ENCODE measurements at regions of chr22 and their contacts with region 1.

Region 1: DNA sequence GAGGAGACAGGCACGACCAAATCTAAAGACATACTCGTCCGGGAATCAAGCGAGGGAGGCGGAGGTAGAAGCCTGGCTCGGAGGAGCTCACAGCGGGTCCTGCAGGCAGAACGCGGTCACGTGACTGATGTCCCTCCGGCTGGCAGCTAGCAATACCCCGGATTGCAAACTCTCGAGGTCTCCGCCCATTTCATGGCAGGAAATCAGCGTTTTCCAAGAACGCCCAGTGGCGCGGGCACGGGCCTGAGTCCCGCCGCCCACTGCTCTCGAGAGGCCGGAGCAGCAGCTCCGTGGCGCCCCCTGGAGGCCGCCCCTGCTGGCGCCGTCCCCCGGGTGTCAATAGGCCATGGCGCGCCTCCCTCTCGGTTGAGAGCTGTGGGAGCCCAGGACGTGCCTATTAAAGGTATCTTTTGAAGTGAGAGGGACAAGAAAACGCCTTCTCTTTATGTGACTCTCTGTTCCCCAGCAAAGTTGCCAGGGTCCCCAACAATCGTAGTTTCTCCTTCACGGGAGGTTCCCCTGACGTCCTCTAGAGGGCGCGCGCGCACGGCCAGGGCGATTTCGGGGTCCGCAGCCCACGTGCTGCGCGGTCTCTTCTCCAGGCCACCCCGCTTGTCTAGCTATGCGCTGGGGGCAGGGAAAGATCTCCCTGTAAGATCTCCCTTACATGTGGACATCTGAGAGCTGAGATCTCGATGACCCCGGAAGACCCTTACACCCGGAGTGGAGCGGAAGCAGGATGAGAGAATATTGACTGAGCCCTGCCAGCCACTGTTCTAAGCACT is 37.3 kb upstream of the RBFOX2 start:
- DNase-seq: peak; percentile 86 to 94 (median 92)
- ATAC-seq: peak; percentile 99
- H3K4me3 ChIP-seq: peak overlapping the region; percentile 25 to 40
- H3K27ac ChIP-seq: peak overlapping the region; percentile 80 to 87
- H3K4me1 ChIP-seq: peaks cover 0 to 10% of the 10 kb centered on the region in 2 donors
- H3K27me3 ChIP-seq: no peaks in the 10 kb centered on the region
- CTCF ChIP-seq: peak; percentile 97 to 100

Region 2: GRCh38 chr22:35777335-35777975 is 288.5 kb before region 1 on chr22:
- intact Hi-C with region 1: no loop called
- DNase-seq: no peak
- ATAC-seq: no peak
- H3K4me3 ChIP-seq: no peak overlapping the region
- H3K27ac ChIP-seq: no peak overlapping the region
- H3K4me1 ChIP-seq: no peaks in the 10 kb centered on the region
- H3K27me3 ChIP-seq: no peaks in the 10 kb centered on the region
- CTCF ChIP-seq: no peak

Region 3: GRCh38 chr22:35938226-35938625 is 127.7 kb before region 1 on chr22:
- intact Hi-C with region 1: loop called in 1 of 2 experiments (anchors 5 kb)
- DNase-seq: no peak
- ATAC-seq: no peak
- H3K4me3 ChIP-seq: no peak overlapping the region
- H3K27ac ChIP-seq: no peak overlapping the region
- H3K4me1 ChIP-seq: no peaks in the 10 kb centered on the region
- H3K27me3 ChIP-seq: no peaks in the 10 kb centered on the region
- CTCF ChIP-seq: no peak

Region 4: DNA sequence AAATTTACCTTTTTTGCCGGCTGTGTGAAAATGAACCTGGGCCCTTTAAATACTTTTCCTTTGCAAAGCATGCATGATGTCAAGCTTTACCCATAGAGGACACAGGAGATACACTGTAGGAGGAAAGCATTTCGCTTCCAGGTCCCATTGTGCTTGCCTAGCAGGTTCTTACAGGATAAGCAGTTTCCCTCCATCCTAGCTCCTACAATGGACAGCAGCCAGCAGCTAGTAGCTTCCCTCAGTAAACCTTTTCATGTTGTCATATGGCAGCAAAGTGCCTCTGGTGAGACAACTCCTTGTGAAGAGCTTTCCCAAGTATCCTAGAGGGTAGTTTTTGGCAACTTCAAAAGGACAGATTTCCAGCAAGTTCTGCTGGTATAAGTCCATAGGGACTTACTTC is 115.7 kb before region 1 on chr22:
- intact Hi-C with region 1: no loop called
- DNase-seq: no peak
- ATAC-seq: no peak
- H3K4me3 ChIP-seq: no peak overlapping the region
- H3K27ac ChIP-seq: no peak overlapping the region
- H3K4me1 ChIP-seq: no peaks in the 10 kb centered on the region
- H3K27me3 ChIP-seq: no peaks in the 10 kb centered on the region
- CTCF ChIP-seq: no peak

Region 5: GRCh38 chr22:36194971-36195370 is 129.0 kb after region 1 on chr22:
- intact Hi-C with region 1: no loop called
- DNase-seq: peak in 2 of 4 donors; percentile 67 to 75
- ATAC-seq: peak; percentile 90
- H3K4me3 ChIP-seq: no peak overlapping the region
- H3K27ac ChIP-seq: no peak overlapping the region
- H3K4me1 ChIP-seq: peaks cover 3 to 35% of the 10 kb centered on the region in 2 donors
- H3K27me3 ChIP-seq: no peaks in the 10 kb centered on the region
- CTCF ChIP-seq: peak; percentile 63 to 67

Measured in left lung (tissue), 14 donors.